ENCODE measurements at regions of chr19 and their contacts with region 1.

Region 1: GRCh38 chr19:7502552-7502951 is 13.4 kb upstream of the ZNF358 start:
- DNase-seq: no peak
- H3K4me3 ChIP-seq: no peak overlapping the region
- H3K27ac ChIP-seq: no peak overlapping the region
- H3K27me3 ChIP-seq: peaks cover 0 to 4% (median 0%) of the 10 kb centered on the region in 45 donors
- CTCF ChIP-seq: no peak

Region 2: GRCh38 chr19:7515645-7516151 is 13.1 kb after region 1 on chr19 and contains the start of gene ZNF358:
- intact Hi-C with region 1: loop called in 1 of 2 experiments (anchors 2 kb)
- DNase-seq: peak; percentile 75 to 92 (median 82)
- H3K4me3 ChIP-seq: peak within 1 kb of the TSS; percentile 64 to 93 (median 82)
- H3K27ac ChIP-seq: peak within 1 kb of the TSS; percentile 86 to 99 (median 97)
- H3K27me3 ChIP-seq: no peaks in the 10 kb centered on the region
- CTCF ChIP-seq: no peak
- total RNA-seq, gene ZNF358: 69.6 to 225 (median 107) TPM

Measured in dorsolateral prefrontal cortex (tissue), 120 donors.